ENCODE measurements at regions of chr5 and their contacts with region 1.

Region 1: DNA sequence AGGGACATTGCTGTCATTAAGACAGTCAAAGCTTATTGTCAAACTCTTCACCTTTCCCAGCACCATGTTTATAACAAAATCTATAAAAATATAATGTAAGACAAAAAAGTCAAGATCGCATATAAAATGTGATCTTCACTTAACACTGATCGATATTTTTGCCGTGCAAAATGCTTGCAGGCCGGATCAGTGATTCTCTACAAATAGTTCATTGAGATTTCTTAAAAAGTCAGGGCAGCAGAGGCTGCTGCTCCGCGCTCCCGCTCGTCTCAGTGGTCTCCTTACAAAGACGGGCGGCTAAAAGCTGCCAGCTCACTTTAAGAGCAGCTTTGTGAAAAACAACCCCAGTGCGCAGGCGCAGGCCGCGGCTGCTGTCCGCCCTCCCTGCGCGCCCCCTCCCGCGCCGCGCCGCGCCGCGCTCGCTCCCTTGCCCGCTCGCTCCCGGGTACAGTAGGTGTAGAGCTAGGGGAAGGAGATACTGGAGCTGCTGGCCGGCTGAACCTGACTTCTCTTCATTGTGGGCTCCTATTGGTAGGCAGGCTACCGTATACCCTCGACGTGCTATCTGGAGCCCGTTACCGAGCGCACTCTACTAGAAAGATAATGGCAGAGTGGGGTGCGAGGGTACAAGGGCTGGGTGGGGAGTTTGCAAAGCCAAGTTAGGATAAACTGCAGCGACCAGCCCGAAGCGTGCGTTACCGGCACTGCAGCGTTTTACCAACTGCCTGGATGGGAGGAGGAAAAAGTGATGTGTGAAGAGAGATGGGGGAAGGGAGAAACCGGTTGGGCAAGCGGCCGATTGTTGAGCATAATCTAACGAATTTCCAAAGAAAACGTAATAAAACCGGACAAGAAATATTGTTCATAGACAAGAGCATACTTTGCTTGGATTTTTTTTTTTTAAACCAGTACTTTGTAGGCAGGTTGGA is at the start of gene ARRDC3:
- DNase-seq: peak; percentile 93 to 99 (median 98)
- ATAC-seq: peak; percentile 33
- H3K4me3 ChIP-seq: peak within 1 kb of the TSS; percentile 91
- H3K4me3 Mint-ChIP-seq: peak within 1 kb of the TSS; percentile 93
- H3K27ac ChIP-seq: peak within 1 kb of the TSS; percentile 97 to 100
- H3K27ac Mint-ChIP-seq: peak within 1 kb of the TSS; percentile 99
- H3K4me1 ChIP-seq: peaks cover 7% of the 10 kb centered on the region
- H3K4me1 Mint-ChIP-seq: peaks cover 30% of the 10 kb centered on the region
- H3K27me3 ChIP-seq: no peaks in the 10 kb centered on the region
- H3K27me3 Mint-ChIP-seq: no peaks in the 10 kb centered on the region
- CTCF ChIP-seq: no peak
- total RNA-seq, gene ARRDC3: 273 to 284 TPM

Region 2: GRCh38 chr5:90474235-90475109 is 908.8 kb before region 1 on chr5 and contains the starts of genes MBLAC2 and POLR3G:
- CTCF ChIA-PET with region 1: interaction called, 3 read pairs
- POLR2A ChIA-PET with region 1: interaction called, 25 read pairs
- intact Hi-C with region 1: loop called in 1 of 2 experiments (anchors 5 kb)
- DNase-seq: peak; percentile 89 to 97 (median 93)
- ATAC-seq: peak; percentile 88
- H3K4me3 ChIP-seq: peak within 1 kb of the TSS; percentile 98
- H3K4me3 Mint-ChIP-seq: peak within 1 kb of the TSS; percentile 100
- H3K27ac ChIP-seq: peak within 1 kb of the TSS; percentile 70 to 74
- H3K27ac Mint-ChIP-seq: peak within 1 kb of the TSS; percentile 92
- H3K4me1 ChIP-seq: peaks cover 19% of the 10 kb centered on the region
- H3K4me1 Mint-ChIP-seq: peaks cover 48% of the 10 kb centered on the region
- H3K27me3 ChIP-seq: no peaks in the 10 kb centered on the region
- H3K27me3 Mint-ChIP-seq: no peaks in the 10 kb centered on the region
- CTCF ChIP-seq: peak; percentile 49
- total RNA-seq, gene MBLAC2: 3.9 to 4.1 TPM
- total RNA-seq, gene POLR3G: 0.80 to 2.3 TPM

Region 3: GRCh38 chr5:90873033-90873517 is 510.2 kb before region 1 on chr5:
- CTCF ChIA-PET with region 1: interaction called, 6 read pairs
- POLR2A ChIA-PET with region 1: interaction called, 16 read pairs
- intact Hi-C with region 1: loop called in 1 of 2 experiments (anchors 10 kb)
- DNase-seq: peak in 4 of 14 experiments; percentile 8 to 42 (median 26)
- ATAC-seq: peak; percentile 86
- H3K4me3 ChIP-seq: no peak overlapping the region
- H3K4me3 Mint-ChIP-seq: no peak overlapping the region
- H3K27ac ChIP-seq: no peak overlapping the region
- H3K27ac Mint-ChIP-seq: no peak overlapping the region
- H3K4me1 ChIP-seq: peaks cover 4% of the 10 kb centered on the region
- H3K4me1 Mint-ChIP-seq: peaks cover 23% of the 10 kb centered on the region
- H3K27me3 ChIP-seq: no peaks in the 10 kb centered on the region
- H3K27me3 Mint-ChIP-seq: peaks cover 25% of the 10 kb centered on the region
- CTCF ChIP-seq: no peak

Region 4: GRCh38 chr5:91189480-91190300 is 193.6 kb before region 1 on chr5:
- CTCF ChIA-PET with region 1: no interaction called
- POLR2A ChIA-PET with region 1: no interaction called
- intact Hi-C with region 1: no loop called
- DNase-seq: peak in 3 of 14 experiments; percentile 11 to 25 (median 14)
- ATAC-seq: no peak
- H3K4me3 ChIP-seq: no peak overlapping the region
- H3K4me3 Mint-ChIP-seq: no peak overlapping the region
- H3K27ac ChIP-seq: no peak overlapping the region
- H3K27ac Mint-ChIP-seq: no peak overlapping the region
- H3K4me1 ChIP-seq: no peaks in the 10 kb centered on the region
- H3K4me1 Mint-ChIP-seq: no peaks in the 10 kb centered on the region
- H3K27me3 ChIP-seq: no peaks in the 10 kb centered on the region
- H3K27me3 Mint-ChIP-seq: peaks cover 16% of the 10 kb centered on the region
- CTCF ChIP-seq: no peak

Region 5: GRCh38 chr5:91219803-91220371 is 163.4 kb before region 1 on chr5:
- CTCF ChIA-PET with region 1: interaction called, 64 read pairs
- POLR2A ChIA-PET with region 1: interaction called, 37 read pairs
- intact Hi-C with region 1: no loop called
- DNase-seq: peak in 12 of 14 experiments; percentile 2 to 55 (median 18)
- ATAC-seq: no peak
- H3K4me3 ChIP-seq: no peak overlapping the region
- H3K4me3 Mint-ChIP-seq: no peak overlapping the region
- H3K27ac ChIP-seq: no peak overlapping the region
- H3K27ac Mint-ChIP-seq: no peak overlapping the region
- H3K4me1 ChIP-seq: no peaks in the 10 kb centered on the region
- H3K4me1 Mint-ChIP-seq: no peaks in the 10 kb centered on the region
- H3K27me3 ChIP-seq: no peaks in the 10 kb centered on the region
- H3K27me3 Mint-ChIP-seq: no peaks in the 10 kb centered on the region
- CTCF ChIP-seq: peak; percentile 42

Region 6: GRCh38 chr5:91280362-91281269 is 102.7 kb before region 1 on chr5:
- CTCF ChIA-PET with region 1: interaction called, 15 read pairs
- POLR2A ChIA-PET with region 1: interaction called, 86 read pairs
- intact Hi-C with region 1: loop called in 1 of 2 experiments (anchors 2 kb)
- DNase-seq: peak; percentile 65 to 95 (median 79)
- ATAC-seq: peak; percentile 84
- H3K4me3 ChIP-seq: peak overlapping the region; percentile 63
- H3K4me3 Mint-ChIP-seq: peak overlapping the region; percentile 90
- H3K27ac ChIP-seq: peak overlapping the region in 1 of 2 donors; percentile 14
- H3K27ac Mint-ChIP-seq: peak overlapping the region; percentile 79
- H3K4me1 ChIP-seq: peaks cover 19% of the 10 kb centered on the region
- H3K4me1 Mint-ChIP-seq: peaks cover 23% of the 10 kb centered on the region
- H3K27me3 ChIP-seq: no peaks in the 10 kb centered on the region
- H3K27me3 Mint-ChIP-seq: no peaks in the 10 kb centered on the region
- CTCF ChIP-seq: no peak

Region 7: GRCh38 chr5:91367908-91368648 is 15.2 kb before region 1 on chr5:
- CTCF ChIA-PET with region 1: interaction called, 7 read pairs
- POLR2A ChIA-PET with region 1: interaction called, 87 read pairs
- intact Hi-C with region 1: loop called in 1 of 2 experiments (anchors 1 kb)
- DNase-seq: no peak
- ATAC-seq: no peak
- H3K4me3 ChIP-seq: no peak overlapping the region
- H3K4me3 Mint-ChIP-seq: no peak overlapping the region
- H3K27ac ChIP-seq: no peak overlapping the region
- H3K27ac Mint-ChIP-seq: no peak overlapping the region
- H3K4me1 ChIP-seq: no peaks in the 10 kb centered on the region
- H3K4me1 Mint-ChIP-seq: peaks cover 43% of the 10 kb centered on the region
- H3K27me3 ChIP-seq: no peaks in the 10 kb centered on the region
- H3K27me3 Mint-ChIP-seq: no peaks in the 10 kb centered on the region
- CTCF ChIP-seq: no peak

Measured in CD4-positive, alpha-beta T cell (primary cell).